ENCODE measurements at regions of chr19 and their contacts with region 1.

Region 1: DNA sequence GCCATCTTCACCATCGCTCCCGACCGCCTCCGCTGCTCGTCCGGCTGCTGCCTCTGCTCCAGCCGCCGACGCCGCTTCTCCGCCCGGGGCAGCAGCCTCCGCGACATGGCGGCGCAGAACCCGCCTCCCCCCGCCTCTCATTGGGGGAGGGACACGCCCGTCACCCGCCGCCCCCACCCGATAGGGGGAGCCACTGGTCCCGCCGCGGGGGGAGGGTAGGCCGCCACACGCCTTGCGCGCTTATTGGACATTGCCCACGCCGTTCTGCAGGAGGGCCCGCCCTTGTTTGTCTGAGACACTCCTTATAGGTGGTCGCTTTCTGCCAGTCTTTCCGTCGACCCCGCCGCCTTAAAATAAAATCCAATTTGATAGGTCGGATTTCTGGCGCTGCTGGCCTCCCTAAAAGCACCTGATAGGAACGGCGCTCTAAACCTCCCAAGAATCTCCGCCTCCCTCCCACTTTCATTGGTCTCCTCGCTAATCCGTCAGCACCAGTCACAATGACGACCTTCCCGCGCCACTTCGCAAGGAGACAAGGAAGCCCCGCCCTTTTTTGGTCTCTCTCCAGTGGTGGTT is at the start of gene HNRNPL:
- DNase-seq: peak in 4 of 7 donors; percentile 99 to 100 (median 100)
- H3K4me3 ChIP-seq: peak within 1 kb of the TSS; percentile 25 to 99 (median 76)
- H3K27ac ChIP-seq: peak within 1 kb of the TSS; percentile 98 to 100 (median 100)
- H3K4me1 ChIP-seq: peaks cover 24 to 45% of the 10 kb centered on the region in 2 donors
- H3K27me3 ChIP-seq: no peaks in the 10 kb centered on the region
- CTCF ChIP-seq: peak; percentile 16 to 54 (median 36)
- POLR2A ChIP-seq: peak; percentile 96
- total RNA-seq, gene HNRNPL: 133 to 295 (median 200) TPM

Region 2: GRCh38 chr19:38729653-38730469 is 120.1 kb before region 1 on chr19:
- intact Hi-C with region 1: loop called (anchors 5 to 10 kb)
- DNase-seq: peak; percentile 71 to 84 (median 78)
- H3K4me3 ChIP-seq: no peak overlapping the region
- H3K27ac ChIP-seq: peak overlapping the region in 3 of 5 donors; percentile 57 to 87 (median 60)
- H3K4me1 ChIP-seq: peaks cover 24 to 29% of the 10 kb centered on the region in 2 donors
- H3K27me3 ChIP-seq: no peaks in the 10 kb centered on the region
- CTCF ChIP-seq: peak; percentile 60 to 83 (median 74)
- POLR2A ChIP-seq: no peak

Measured in adrenal gland (tissue), 19 donors.